ENCODE measurements at regions of chr1 and their contacts with region 1.

Region 1: DNA sequence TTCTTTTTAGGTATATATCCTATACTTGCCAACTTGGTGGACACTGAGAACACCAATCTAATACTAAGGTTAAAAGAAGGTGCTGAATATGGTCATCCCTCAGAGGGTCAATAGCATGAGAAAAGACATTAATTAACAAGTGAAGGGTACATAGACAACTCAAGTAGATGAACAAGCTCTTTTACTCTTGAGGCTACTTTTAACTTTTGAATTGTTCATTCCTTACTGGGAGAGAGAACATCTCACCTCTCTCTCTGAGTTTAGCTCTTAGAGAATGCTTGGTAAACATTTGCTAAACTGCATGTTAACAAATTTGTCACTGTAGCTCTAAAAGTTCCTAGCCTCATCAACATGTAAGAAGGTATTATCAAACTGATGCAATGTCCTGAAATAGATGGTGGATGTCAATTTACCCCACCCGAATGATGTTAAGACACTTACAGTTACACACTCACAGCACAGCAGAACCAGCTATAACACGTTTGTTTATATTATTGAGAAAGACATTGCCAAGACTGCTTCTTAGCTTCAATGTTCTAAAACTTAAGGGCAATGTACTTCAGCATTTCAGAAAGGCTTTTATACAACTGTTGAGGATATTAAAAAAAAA is 35.9 kb downstream of the HEATR1 start:
- DNase-seq: no peak

Region 2: GRCh38 chr1:236451796-236452373 is 116.5 kb before region 1 on chr1:
- intact Hi-C with region 1: no loop called
- DNase-seq: no peak

Region 3: DNA sequence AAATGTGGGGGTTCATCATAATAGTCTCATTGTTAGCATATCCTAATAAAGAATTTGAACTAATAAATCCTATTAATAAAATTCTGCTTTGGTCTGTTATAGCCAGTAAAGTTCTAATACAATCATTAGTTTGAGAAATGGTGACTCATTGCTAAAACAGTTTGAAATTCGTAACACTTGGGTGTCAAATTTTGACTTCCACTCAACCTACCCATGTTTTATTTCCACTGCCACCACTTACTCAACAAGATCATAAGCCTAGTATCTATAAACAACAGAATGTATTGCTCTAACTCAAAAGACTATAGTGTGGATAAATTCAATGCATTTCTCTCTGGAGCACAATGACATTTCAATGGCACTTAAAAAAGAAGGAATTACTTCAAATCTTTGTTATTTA is 15.5 kb before region 1 on chr1:
- intact Hi-C with region 1: loop called in 1 of 2 experiments (anchors 1 kb)
- DNase-seq: no peak